ENCODE measurements at regions of chr4 and their contacts with region 1.

Region 1: DNA sequence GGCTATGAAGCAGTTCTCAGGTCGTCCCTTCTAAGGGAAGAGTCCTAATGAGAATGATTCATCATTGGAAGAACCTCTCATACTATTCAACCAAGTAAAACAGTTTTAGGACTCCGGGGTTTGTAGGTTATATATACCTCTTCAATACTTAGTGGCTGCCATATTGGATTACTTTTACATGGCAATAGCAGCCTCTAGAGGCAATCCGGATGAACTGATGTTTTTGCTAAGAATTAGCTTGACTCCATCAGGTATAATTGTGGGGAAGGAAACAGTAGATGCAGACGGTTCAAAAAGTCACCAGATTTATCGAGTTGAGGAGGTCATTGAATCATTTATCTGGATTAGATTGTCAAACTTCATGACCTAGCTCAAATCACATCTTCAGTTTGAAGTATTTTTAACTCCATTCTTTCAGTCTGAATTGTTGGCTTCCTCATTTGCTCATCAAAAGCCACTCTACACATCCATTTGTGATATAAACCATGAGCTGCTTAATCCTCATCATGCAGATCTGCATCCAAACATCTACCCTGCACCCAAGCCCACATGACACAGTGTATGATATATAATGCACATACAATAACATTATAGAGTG is 28.4 kb downstream of the GUCY1B1 start:
- DNase-seq: peak; percentile 83

Region 2: GRCh38 chr4:155403886-155404285 is 383.3 kb before region 1 on chr4:
- in situ Hi-C with region 1: loop called (anchors 25 kb)
- DNase-seq: peak; percentile 42

Region 3: DNA sequence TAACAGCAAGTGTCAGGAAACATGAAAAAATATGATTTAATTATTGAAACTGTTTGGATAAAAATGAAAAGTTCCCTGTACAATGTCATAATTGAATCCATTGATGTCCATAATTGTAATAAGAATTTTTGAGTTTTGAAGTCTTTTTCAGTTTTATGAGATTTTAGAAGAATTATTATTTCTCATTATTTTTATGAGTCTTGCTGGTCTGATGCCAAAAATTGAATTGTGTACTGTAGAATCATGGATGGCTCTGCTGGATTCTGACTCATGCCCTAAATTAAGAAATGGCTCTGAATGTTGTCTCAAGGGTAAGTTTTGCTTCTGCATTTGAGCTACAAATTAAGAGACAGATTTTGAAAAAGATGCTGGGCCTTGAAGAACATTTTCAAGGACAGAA is 277.7 kb before region 1 on chr4:
- in situ Hi-C with region 1: loop called (anchors 25 kb)
- DNase-seq: no peak

Region 4: DNA sequence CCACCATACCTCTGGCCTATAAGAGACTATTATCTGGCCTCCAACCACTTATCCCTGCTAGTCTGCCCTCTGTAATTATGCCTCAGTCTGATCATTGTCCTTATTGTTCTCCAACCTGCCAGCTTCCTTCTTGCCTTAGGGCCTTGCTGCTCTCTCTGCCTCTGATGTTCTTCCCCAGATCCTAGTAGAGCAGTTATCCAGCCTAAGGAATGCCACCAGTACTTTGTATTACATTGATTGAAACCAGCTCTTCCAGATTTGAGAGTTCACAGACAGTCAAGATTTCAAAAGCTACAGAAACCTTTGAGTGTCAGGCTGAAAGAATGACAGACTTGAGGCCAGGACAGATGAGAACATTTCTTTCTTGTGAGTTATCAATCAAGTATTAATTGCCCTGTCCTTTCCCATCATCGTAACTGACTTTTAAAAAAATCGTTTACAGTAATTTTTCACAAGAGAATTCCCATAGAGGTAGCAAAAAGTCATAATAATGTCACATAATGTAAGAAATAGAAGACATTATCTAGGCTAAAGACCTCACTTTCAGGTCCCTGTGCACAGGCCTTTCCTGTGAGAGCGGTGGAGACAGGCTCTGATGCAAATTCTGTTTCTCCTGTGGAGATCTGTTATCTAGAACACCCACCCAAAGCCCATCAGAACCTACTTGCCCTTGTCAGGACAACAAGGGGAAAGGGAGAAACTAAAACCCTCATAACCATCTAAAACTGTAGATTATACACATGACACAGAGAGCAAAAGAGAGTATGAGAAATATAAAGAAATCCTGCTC is 184.7 kb before region 1 on chr4:
- in situ Hi-C with region 1: no loop called
- DNase-seq: no peak

Region 5: GRCh38 chr4:156038772-156039171 is 251.6 kb after region 1 on chr4:
- in situ Hi-C with region 1: no loop called
- DNase-seq: no peak

Measured in KBM-7 (cell line).